GM12878 (cell line): ENCODE measurements at regions of chr9 and their contacts with region 1.

Region 1: GRCh38 chr9:130866474-130866965 is 30.1 kb downstream of the QRFP start:
- DNase-seq: peak; percentile 17
- ATAC-seq: peak; percentile 50
- H3K4me3 ChIP-seq: no peak overlapping the region
- H3K27ac ChIP-seq: no peak overlapping the region
- H3K4me1 ChIP-seq: peaks cover 19% of the 10 kb centered on the region
- H3K27me3 ChIP-seq: no peaks in the 10 kb centered on the region
- CTCF ChIP-seq: peak; percentile 67 to 79 (median 78)
- EP300 ChIP-seq: no peak
- POLR2A ChIP-seq: no peak
- RAD21 ChIP-seq: peak; percentile 57

Region 2: GRCh38 chr9:130451509-130452388 is 414.8 kb before region 1 on chr9:
- CTCF ChIA-PET with region 1: no interaction called
- POLR2A ChIA-PET with region 1: no interaction called
- RAD21 ChIA-PET with region 1: no interaction called
- SMC1A ChIA-PET with region 1: no interaction called
- in situ Hi-C with region 1: loop called (anchors 10 kb)
- intact Hi-C with region 1: no loop called
- DNase-seq: no peak
- ATAC-seq: peak; percentile 52
- H3K4me3 ChIP-seq: no peak overlapping the region
- H3K27ac ChIP-seq: no peak overlapping the region
- H3K4me1 ChIP-seq: no peaks in the 10 kb centered on the region
- H3K27me3 ChIP-seq: no peaks in the 10 kb centered on the region
- CTCF ChIP-seq: peak; percentile 8 to 44 (median 29); a peak in 1 of 6 replicates
- EP300 ChIP-seq: no peak
- POLR2A ChIP-seq: no peak
- RAD21 ChIP-seq: no peak

Region 3: DNA sequence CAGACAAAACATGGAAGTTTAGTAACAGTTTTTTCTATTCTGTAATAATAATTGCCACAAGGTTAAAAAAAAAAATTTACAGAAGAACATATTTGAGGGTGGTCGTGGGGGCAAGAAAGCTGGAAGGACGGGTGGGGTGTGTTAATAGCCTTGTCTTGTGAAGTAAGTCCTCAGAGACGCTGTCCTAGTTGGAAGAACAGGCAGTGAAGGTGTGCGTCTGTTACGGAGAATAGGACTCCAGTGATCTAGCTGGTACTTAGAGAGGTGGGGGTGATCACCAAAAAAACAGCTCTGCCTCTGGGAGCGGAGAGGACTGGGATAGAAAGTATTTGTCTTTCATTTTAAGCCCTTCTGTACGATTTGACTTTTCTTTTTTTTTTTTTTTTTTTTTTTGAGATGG is 13.7 kb before region 1 on chr9:
- CTCF ChIA-PET with region 1: interaction called, 10 read pairs
- POLR2A ChIA-PET with region 1: interaction called, 4 read pairs
- RAD21 ChIA-PET with region 1: no interaction called
- SMC1A ChIA-PET with region 1: interaction called, 3 read pairs
- in situ Hi-C with region 1: no loop called
- intact Hi-C with region 1: no loop called
- DNase-seq: no peak
- ATAC-seq: no peak
- H3K4me3 ChIP-seq: no peak overlapping the region
- H3K27ac ChIP-seq: no peak overlapping the region
- H3K4me1 ChIP-seq: no peaks in the 10 kb centered on the region
- H3K27me3 ChIP-seq: no peaks in the 10 kb centered on the region
- CTCF ChIP-seq: no peak
- EP300 ChIP-seq: no peak
- POLR2A ChIP-seq: no peak
- RAD21 ChIP-seq: no peak

Region 4: DNA sequence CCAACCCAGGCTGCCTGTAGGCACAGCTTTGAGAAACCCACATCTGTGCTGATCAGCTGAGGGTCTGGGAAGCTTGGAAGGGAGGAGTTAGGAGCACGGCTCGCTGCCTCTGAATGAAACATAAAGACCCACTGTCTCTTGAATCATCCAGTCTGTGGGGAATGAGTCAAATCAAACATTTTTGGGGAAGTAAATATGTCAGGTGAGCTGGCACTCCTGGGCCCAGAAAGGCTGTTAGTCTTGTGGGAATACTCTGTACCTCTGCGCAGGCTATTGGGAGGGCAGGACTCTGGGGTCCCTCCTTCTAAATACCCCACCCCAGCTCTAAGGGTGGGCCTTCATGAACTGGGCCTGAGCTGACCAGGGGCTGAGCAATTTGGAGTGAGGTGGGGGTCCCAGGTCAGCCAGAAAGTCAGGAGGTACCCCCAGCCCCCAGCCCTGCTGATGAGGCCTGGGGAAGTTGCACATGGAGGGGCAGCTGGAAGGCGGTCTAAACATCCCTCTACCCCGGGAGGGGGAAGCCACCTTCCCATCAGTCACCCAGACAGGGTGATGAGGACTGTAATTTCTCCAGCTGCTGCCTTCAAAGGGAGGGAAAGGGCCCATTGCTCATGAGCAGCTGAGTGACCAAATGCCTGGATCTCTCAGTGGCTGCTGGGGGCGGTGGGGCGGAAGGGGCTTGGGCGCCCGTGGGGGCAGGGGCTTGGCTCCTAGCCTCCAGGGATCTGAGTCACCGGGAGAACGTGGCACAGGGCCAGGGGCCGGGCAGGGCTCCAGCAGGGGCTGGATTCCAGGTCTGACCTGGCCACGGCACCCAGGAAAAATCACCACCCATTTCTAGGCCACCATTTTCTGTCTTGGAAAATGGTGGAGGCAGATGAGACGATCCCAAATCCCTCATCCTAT is 61.7 kb after region 1 on chr9:
- CTCF ChIA-PET with region 1: interaction called, 89 read pairs
- POLR2A ChIA-PET with region 1: no interaction called
- RAD21 ChIA-PET with region 1: interaction called, 33 read pairs
- SMC1A ChIA-PET with region 1: interaction called, 20 read pairs
- in situ Hi-C with region 1: no loop called
- intact Hi-C with region 1: no loop called
- DNase-seq: peak; percentile 70
- ATAC-seq: peak; percentile 67
- H3K4me3 ChIP-seq: peak overlapping the region; percentile 4; the same call in 1 of the 2 replicates
- H3K27ac ChIP-seq: 0 out of 2 replicates have a peak overlapping the region, but pooled peaks have one; percentile 37
- H3K4me1 ChIP-seq: peaks cover 49% of the 10 kb centered on the region
- H3K27me3 ChIP-seq: no peaks in the 10 kb centered on the region
- CTCF ChIP-seq: no peak
- EP300 ChIP-seq: peak in 1 of 2 experiments; percentile 73; a peak in 3 of 4 replicates
- POLR2A ChIP-seq: no peak
- RAD21 ChIP-seq: no peak

Region 5: GRCh38 chr9:130940693-130941576 is 74.4 kb after region 1 on chr9:
- CTCF ChIA-PET with region 1: interaction called, 89 read pairs
- POLR2A ChIA-PET with region 1: no interaction called
- RAD21 ChIA-PET with region 1: interaction called, 7 read pairs
- SMC1A ChIA-PET with region 1: interaction called, 13 read pairs
- in situ Hi-C with region 1: loop called (anchors 5 kb)
- intact Hi-C with region 1: loop called (anchors 1 kb)
- DNase-seq: no peak
- ATAC-seq: peak; percentile 91
- H3K4me3 ChIP-seq: no peak overlapping the region
- H3K27ac ChIP-seq: no peak overlapping the region
- H3K4me1 ChIP-seq: no peaks in the 10 kb centered on the region; the same call in 1 of the 2 replicates
- H3K27me3 ChIP-seq: peaks cover 6 to 21% of the 10 kb centered on the region in 2 experiments
- CTCF ChIP-seq: peak; percentile 86 to 96 (median 95)
- EP300 ChIP-seq: no peak
- POLR2A ChIP-seq: no peak
- RAD21 ChIP-seq: peak; percentile 82

Region 6: GRCh38 chr9:130997925-130998596 is 131.5 kb after region 1 on chr9:
- CTCF ChIA-PET with region 1: interaction called, 33 read pairs
- POLR2A ChIA-PET with region 1: no interaction called
- RAD21 ChIA-PET with region 1: interaction called, 16 read pairs
- SMC1A ChIA-PET with region 1: interaction called, 13 read pairs
- in situ Hi-C with region 1: no loop called
- intact Hi-C with region 1: loop called (anchors 1 kb)
- DNase-seq: no peak
- ATAC-seq: peak; percentile 91
- H3K4me3 ChIP-seq: no peak overlapping the region
- H3K27ac ChIP-seq: no peak overlapping the region
- H3K4me1 ChIP-seq: no peaks in the 10 kb centered on the region
- H3K27me3 ChIP-seq: peaks cover 0 to 2% of the 10 kb centered on the region in 2 experiments; a peak in 2 of 4 replicates
- CTCF ChIP-seq: peak; percentile 57 to 69 (median 60)
- EP300 ChIP-seq: no peak
- POLR2A ChIP-seq: no peak
- RAD21 ChIP-seq: peak; percentile 62

Region 7: GRCh38 chr9:131046581-131047202 is 180.2 kb after region 1 on chr9:
- CTCF ChIA-PET with region 1: interaction called, 39 read pairs
- POLR2A ChIA-PET with region 1: no interaction called
- RAD21 ChIA-PET with region 1: interaction called, 29 read pairs
- SMC1A ChIA-PET with region 1: interaction called, 20 read pairs
- in situ Hi-C with region 1: loop called (anchors 5 kb)
- intact Hi-C with region 1: loop called (anchors 1 kb)
- DNase-seq: no peak
- ATAC-seq: peak; percentile 96
- H3K4me3 ChIP-seq: no peak overlapping the region
- H3K27ac ChIP-seq: no peak overlapping the region
- H3K4me1 ChIP-seq: peaks cover 13% of the 10 kb centered on the region
- H3K27me3 ChIP-seq: no peaks in the 10 kb centered on the region
- CTCF ChIP-seq: peak; percentile 92 to 95 (median 92)
- EP300 ChIP-seq: no peak
- POLR2A ChIP-seq: no peak
- RAD21 ChIP-seq: peak; percentile 94

Region 8: DNA sequence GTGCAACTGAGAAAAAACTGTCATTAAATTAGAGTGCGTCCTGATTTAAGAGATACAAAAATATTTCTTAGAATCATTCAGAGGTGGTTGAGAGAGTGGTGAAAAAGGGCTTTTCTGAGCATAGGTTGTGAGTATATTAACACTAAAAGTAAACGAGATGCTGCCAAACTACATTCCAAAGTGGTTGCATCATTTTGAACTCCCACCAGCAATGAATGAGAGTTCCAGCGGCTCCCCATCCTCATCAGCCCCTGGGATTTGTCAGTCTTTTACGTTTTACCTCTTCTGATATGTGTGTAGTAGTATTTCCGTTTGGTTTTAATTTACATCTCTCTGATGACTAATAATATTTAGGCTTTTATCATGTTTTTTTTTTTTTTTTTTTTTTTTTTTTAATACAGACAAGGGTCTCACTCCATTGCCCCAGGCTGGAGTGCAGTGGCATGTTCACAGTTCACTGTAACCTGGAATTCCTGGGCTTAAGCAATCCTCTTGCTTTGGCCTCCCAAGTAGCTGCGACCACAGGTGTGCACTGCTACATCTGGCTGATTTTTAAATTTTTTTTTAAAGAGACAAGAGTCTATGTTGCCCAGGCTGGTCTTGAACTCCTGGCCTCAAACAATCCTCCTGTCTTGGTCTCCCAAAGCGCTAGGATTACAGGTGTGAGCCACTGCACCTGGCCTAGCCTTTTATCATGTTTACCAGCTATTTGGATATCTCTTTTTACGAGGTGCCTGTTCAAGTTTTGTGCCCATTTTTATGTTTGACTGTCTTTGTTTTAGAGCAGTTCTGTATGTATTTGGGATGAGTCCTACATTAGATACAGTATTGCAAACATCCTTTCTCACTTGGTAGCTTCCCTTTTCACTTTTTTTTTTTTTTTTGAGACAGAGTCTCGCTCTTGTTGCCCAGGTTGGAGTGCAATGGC is 695.8 kb after region 1 on chr9:
- CTCF ChIA-PET with region 1: no interaction called
- POLR2A ChIA-PET with region 1: no interaction called
- RAD21 ChIA-PET with region 1: no interaction called
- SMC1A ChIA-PET with region 1: no interaction called
- in situ Hi-C with region 1: no loop called
- intact Hi-C with region 1: no loop called
- DNase-seq: no peak
- ATAC-seq: no peak
- H3K4me3 ChIP-seq: no peak overlapping the region
- H3K27ac ChIP-seq: no peak overlapping the region
- H3K4me1 ChIP-seq: no peaks in the 10 kb centered on the region
- H3K27me3 ChIP-seq: no peaks in the 10 kb centered on the region
- CTCF ChIP-seq: no peak
- EP300 ChIP-seq: no peak
- POLR2A ChIP-seq: no peak
- RAD21 ChIP-seq: no peak